Upper lobe of right lung (tissue), 1 donor: ENCODE measurements at regions of chr7 and their contacts with region 1.

Region 1: GRCh38 chr7:36979810-36980248 is 255.5 kb upstream of the AOAH start:
- DNase-seq: no peak
- ATAC-seq: no peak
- H3K4me3 ChIP-seq: no peak overlapping the region
- H3K27ac ChIP-seq: no peak overlapping the region
- H3K4me1 ChIP-seq: peaks cover 10% of the 10 kb centered on the region
- H3K27me3 ChIP-seq: no peaks in the 10 kb centered on the region
- CTCF ChIP-seq: no peak

Region 2: GRCh38 chr7:36904802-36905201 is 75.0 kb before region 1 on chr7:
- intact Hi-C with region 1: no loop called
- DNase-seq: no peak
- ATAC-seq: no peak
- H3K4me3 ChIP-seq: no peak overlapping the region
- H3K27ac ChIP-seq: no peak overlapping the region
- H3K4me1 ChIP-seq: no peaks in the 10 kb centered on the region
- H3K27me3 ChIP-seq: no peaks in the 10 kb centered on the region
- CTCF ChIP-seq: no peak

Region 3: GRCh38 chr7:37181550-37181932 is 201.7 kb after region 1 on chr7:
- intact Hi-C with region 1: loop called (anchors 10 kb)
- DNase-seq: no peak
- ATAC-seq: no peak
- H3K4me3 ChIP-seq: no peak overlapping the region
- H3K27ac ChIP-seq: no peak overlapping the region
- H3K4me1 ChIP-seq: no peaks in the 10 kb centered on the region
- H3K27me3 ChIP-seq: no peaks in the 10 kb centered on the region
- CTCF ChIP-seq: no peak